Aorta (tissue), 5 donors: ENCODE measurements at regions of chr6 and their contacts with region 1.

Region 1: GRCh38 chr6:75208298-75209183 is 2.7 kb upstream of the COL12A1 start:
- DNase-seq: peak; percentile 89 to 96
- ATAC-seq: peak; percentile 81
- H3K4me3 ChIP-seq: no peak overlapping the region
- H3K27ac ChIP-seq: no peak overlapping the region
- H3K4me1 ChIP-seq: no peaks in the 10 kb centered on the region
- H3K27me3 ChIP-seq: no peaks in the 10 kb centered on the region

Region 2: GRCh38 chr6:73739096-73739495 is 1469.4 kb before region 1 on chr6:
- intact Hi-C with region 1: loop called (anchors 2 to 5 kb)
- DNase-seq: no peak
- ATAC-seq: peak; percentile 65
- H3K4me3 ChIP-seq: no peak overlapping the region
- H3K27ac ChIP-seq: no peak overlapping the region
- H3K4me1 ChIP-seq: no peaks in the 10 kb centered on the region
- H3K27me3 ChIP-seq: no peaks in the 10 kb centered on the region

Region 3: DNA sequence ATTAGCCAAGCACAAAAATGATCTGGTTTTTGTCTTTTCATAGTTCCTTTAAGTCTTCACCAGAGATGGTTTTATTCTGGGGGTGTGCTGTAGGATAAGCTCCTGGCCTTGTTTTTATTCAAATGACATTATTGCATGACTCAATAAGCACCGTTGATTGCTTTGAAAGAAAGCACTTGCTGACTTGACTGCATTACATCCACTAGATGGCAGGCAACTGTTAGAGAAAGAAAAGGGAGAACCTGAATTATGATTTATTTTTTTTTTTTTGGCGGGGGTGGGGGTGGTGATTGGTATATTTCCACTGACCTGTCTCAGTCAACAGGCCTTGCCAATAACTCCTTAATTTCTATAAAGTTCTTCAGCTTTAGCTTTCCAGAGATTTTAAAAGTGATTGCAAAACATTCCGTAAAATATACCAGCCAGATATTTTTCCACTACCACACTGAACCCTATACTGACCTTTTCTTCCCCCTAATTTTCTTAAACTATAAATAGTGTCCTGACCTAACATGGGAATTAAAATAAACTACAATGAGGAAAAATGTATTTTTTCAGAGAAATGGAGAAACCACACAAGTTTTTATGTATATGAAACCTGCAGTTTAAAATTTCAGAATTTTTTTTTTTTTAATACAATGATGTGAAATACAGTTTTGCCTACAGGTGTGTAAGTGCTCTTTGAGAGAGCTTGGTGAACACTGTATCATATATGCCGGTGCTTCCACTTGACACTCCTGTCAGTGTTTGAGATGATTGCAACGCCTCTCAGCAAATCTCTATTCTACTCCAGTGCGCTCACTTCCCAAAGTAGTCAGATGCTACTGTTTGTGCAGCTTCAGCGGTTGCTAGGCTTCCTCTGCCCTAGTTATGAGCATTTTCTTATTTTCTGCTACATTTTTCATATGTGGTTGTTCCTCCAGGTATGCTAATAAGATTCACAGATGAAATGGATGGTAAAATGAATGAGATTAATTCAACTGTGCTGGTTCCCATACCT is 1238.3 kb before region 1 on chr6:
- intact Hi-C with region 1: loop called (anchors 5 to 10 kb)
- DNase-seq: no peak
- ATAC-seq: no peak
- H3K4me3 ChIP-seq: no peak overlapping the region
- H3K27ac ChIP-seq: no peak overlapping the region
- H3K4me1 ChIP-seq: no peaks in the 10 kb centered on the region
- H3K27me3 ChIP-seq: no peaks in the 10 kb centered on the region

Region 4: DNA sequence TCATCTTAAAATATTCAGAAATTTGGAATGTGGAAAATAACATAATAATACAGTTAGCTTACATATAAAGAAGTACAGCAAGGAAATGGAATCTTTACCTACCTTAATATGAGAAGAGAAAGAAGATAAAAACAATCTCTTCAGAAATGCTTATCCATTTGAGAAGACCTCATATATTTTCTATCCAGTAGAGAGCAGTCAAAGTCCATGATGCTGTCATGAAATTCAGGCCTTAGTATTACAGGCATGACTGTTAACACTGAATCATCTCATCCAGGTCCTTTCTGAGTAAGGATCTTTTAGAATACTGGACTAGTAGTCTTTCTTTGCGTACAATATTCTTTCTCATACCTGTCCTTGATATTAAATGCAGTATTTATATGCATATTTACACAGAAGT is 799.1 kb before region 1 on chr6:
- intact Hi-C with region 1: loop called (anchors 2 to 5 kb)
- DNase-seq: no peak
- ATAC-seq: peak; percentile 87
- H3K4me3 ChIP-seq: no peak overlapping the region
- H3K27ac ChIP-seq: no peak overlapping the region
- H3K4me1 ChIP-seq: no peaks in the 10 kb centered on the region
- H3K27me3 ChIP-seq: no peaks in the 10 kb centered on the region

Region 5: DNA sequence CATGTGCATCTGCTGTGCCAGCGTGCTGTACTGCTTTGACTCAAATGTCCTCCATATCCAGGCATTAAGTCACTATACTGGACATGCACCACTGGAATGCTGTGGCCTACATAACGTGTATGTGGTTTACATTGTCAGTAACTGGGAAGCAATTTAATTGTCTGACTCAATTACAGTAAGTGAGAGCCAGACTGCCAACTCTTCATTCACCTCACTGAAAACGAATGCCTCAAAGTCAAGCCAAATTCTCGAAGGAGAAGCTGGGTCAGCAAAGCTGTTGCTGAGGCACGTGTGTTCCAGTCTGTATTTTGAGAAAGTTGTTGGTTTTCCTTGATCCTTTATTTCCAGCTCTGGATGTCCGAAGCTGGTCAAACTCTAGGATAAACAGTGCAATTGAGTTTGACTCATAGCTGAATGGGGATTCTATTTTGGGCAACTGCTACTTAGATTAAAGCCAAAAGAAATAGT is 536.9 kb before region 1 on chr6:
- intact Hi-C with region 1: loop called in 1 of 2 experiments (anchors 10 kb)
- DNase-seq: no peak
- ATAC-seq: peak; percentile 74
- H3K4me3 ChIP-seq: no peak overlapping the region
- H3K27ac ChIP-seq: peak overlapping the region; percentile 43 to 86
- H3K4me1 ChIP-seq: peaks cover 3% of the 10 kb centered on the region in 2 donors
- H3K27me3 ChIP-seq: no peaks in the 10 kb centered on the region

Region 6: GRCh38 chr6:74939151-74939708 is 269.3 kb before region 1 on chr6:
- intact Hi-C with region 1: loop called (anchors 5 to 10 kb)
- DNase-seq: no peak
- ATAC-seq: no peak
- H3K4me3 ChIP-seq: no peak overlapping the region
- H3K27ac ChIP-seq: no peak overlapping the region
- H3K4me1 ChIP-seq: no peaks in the 10 kb centered on the region
- H3K27me3 ChIP-seq: no peaks in the 10 kb centered on the region

Region 7: GRCh38 chr6:75334266-75335040 is 125.9 kb after region 1 on chr6:
- intact Hi-C with region 1: no loop called
- DNase-seq: no peak
- ATAC-seq: peak; percentile 79
- H3K4me3 ChIP-seq: no peak overlapping the region
- H3K27ac ChIP-seq: peak overlapping the region; percentile 76 to 82
- H3K4me1 ChIP-seq: peaks cover 0 to 2% of the 10 kb centered on the region in 2 donors
- H3K27me3 ChIP-seq: no peaks in the 10 kb centered on the region